CD4-positive, alpha-beta memory T cell (primary cell): ENCODE measurements at regions of chr7 and their contacts with region 1.

Region 1: GRCh38 chr7:107168233-107169119 is at the start of gene HBP1:
- DNase-seq: peak; percentile 97 to 100 (median 99)
- H3K4me3 ChIP-seq: peak within 1 kb of the TSS; percentile 84 to 85
- H3K4me3 Mint-ChIP-seq: peak within 1 kb of the TSS; percentile 90 to 100 (median 97)
- H3K27ac ChIP-seq: peak within 1 kb of the TSS; percentile 100
- H3K27ac Mint-ChIP-seq: peak within 1 kb of the TSS; percentile 98 to 100 (median 100)
- H3K4me1 ChIP-seq: peaks cover 44% of the 10 kb centered on the region
- H3K4me1 Mint-ChIP-seq: peaks cover 22 to 53% (median 37%) of the 10 kb centered on the region in 4 donors
- H3K27me3 ChIP-seq: no peaks in the 10 kb centered on the region
- H3K27me3 Mint-ChIP-seq: peaks cover 1 to 3% of the 10 kb centered on the region in 2 donors
- total RNA-seq, gene HBP1: 111 to 116 TPM

Region 2: DNA sequence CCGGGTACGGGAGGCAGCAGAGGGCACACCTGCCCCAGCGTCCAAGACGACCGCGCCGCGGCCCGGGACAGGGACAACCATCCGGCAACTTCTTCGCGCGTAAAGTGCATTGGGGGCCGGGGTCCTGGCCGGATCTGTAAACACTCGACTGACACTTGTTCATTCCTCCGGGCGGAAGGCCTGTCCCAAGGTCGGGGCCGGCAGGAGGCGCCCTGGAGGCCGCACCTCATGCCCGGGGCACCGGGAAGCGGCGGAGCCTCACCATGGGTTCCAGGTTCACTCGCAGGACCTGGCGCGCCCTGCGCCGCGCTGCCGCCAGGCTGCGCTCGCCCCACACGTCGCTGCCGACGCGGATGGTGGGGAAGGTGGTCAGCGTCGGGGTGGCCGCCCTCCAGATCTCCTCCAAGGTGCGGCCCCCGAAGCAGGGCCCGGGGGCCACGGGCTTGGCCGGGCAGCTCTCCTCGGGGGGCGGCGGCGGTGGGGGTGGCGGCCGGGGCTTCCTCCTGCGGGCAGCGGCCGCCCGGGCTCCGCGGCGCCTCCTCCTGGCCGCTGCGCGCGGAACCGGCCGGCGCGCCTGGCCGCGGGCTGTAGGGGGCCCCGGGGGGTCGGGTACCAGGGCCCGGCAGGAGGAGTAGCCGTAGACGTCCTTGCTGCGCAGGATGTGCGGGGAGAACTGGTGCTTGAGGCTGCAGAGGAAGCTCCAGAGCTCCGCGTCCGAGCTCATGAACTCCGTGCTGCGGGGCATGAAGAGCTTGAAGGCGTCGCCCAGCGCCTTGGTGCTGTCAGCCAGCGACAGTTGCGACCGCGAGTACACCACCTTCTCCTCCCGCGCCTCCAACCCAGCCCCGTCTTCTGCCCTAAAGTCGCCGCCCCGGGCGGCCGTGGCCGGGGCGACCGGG is 508.3 kb before region 1 on chr7:
- CTCF ChIA-PET with region 1: interaction called, 3 read pairs
- POLR2A ChIA-PET with region 1: interaction called, 5 read pairs
- intact Hi-C with region 1: loop called (anchors 2 kb)
- DNase-seq: peak; percentile 72 to 79 (median 76)
- H3K4me3 ChIP-seq: peak overlapping the region; percentile 14 to 58
- H3K4me3 Mint-ChIP-seq: peak overlapping the region; percentile 85 to 92 (median 88)
- H3K27ac ChIP-seq: peak overlapping the region; percentile 68
- H3K27ac Mint-ChIP-seq: peak overlapping the region; percentile 87 to 97 (median 93)
- H3K4me1 ChIP-seq: peaks cover 35% of the 10 kb centered on the region
- H3K4me1 Mint-ChIP-seq: peaks cover 17 to 40% (median 29%) of the 10 kb centered on the region in 4 donors
- H3K27me3 ChIP-seq: no peaks in the 10 kb centered on the region
- H3K27me3 Mint-ChIP-seq: no peaks in the 10 kb centered on the region

Region 3: GRCh38 chr7:107122486-107122911 is 46.0 kb before region 1 on chr7:
- CTCF ChIA-PET with region 1: interaction called, 6 read pairs
- POLR2A ChIA-PET with region 1: interaction called, 38 read pairs
- intact Hi-C with region 1: loop called (anchors 2 kb)
- DNase-seq: no peak
- H3K4me3 ChIP-seq: no peak overlapping the region
- H3K4me3 Mint-ChIP-seq: no peak overlapping the region
- H3K27ac ChIP-seq: no peak overlapping the region
- H3K27ac Mint-ChIP-seq: no peak overlapping the region
- H3K4me1 ChIP-seq: peaks cover 21% of the 10 kb centered on the region
- H3K4me1 Mint-ChIP-seq: peaks cover 13 to 24% (median 19%) of the 10 kb centered on the region in 4 donors
- H3K27me3 ChIP-seq: no peaks in the 10 kb centered on the region
- H3K27me3 Mint-ChIP-seq: peaks cover 4% of the 10 kb centered on the region in 2 donors

Region 4: GRCh38 chr7:107180378-107180777 is 11.9 kb after region 1 on chr7:
- CTCF ChIA-PET with region 1: interaction called, 5 read pairs
- POLR2A ChIA-PET with region 1: interaction called, 70 read pairs
- intact Hi-C with region 1: loop called (anchors 1 kb)
- DNase-seq: peak in 1 of 5 donors; percentile 78
- H3K4me3 ChIP-seq: no peak overlapping the region
- H3K4me3 Mint-ChIP-seq: peak overlapping the region in 4 of 8 donors; percentile 1 to 59 (median 15)
- H3K27ac ChIP-seq: peak overlapping the region; percentile 13
- H3K27ac Mint-ChIP-seq: peak overlapping the region in 6 of 7 donors; percentile 4 to 80 (median 30)
- H3K4me1 ChIP-seq: peaks cover 41% of the 10 kb centered on the region
- H3K4me1 Mint-ChIP-seq: peaks cover 27 to 61% (median 38%) of the 10 kb centered on the region in 4 donors
- H3K27me3 ChIP-seq: no peaks in the 10 kb centered on the region
- H3K27me3 Mint-ChIP-seq: no peaks in the 10 kb centered on the region

Region 5: GRCh38 chr7:107208024-107208521 is 39.6 kb after region 1 on chr7:
- CTCF ChIA-PET with region 1: no interaction called
- POLR2A ChIA-PET with region 1: interaction called, 13 read pairs
- intact Hi-C with region 1: no loop called
- DNase-seq: no peak
- H3K4me3 ChIP-seq: no peak overlapping the region
- H3K4me3 Mint-ChIP-seq: no peak overlapping the region
- H3K27ac ChIP-seq: no peak overlapping the region
- H3K27ac Mint-ChIP-seq: peak overlapping the region in 4 of 7 donors; percentile 27 to 60 (median 36)
- H3K4me1 ChIP-seq: no peaks in the 10 kb centered on the region
- H3K4me1 Mint-ChIP-seq: no peaks in the 10 kb centered on the region
- H3K27me3 ChIP-seq: no peaks in the 10 kb centered on the region
- H3K27me3 Mint-ChIP-seq: no peaks in the 10 kb centered on the region

Region 6: DNA sequence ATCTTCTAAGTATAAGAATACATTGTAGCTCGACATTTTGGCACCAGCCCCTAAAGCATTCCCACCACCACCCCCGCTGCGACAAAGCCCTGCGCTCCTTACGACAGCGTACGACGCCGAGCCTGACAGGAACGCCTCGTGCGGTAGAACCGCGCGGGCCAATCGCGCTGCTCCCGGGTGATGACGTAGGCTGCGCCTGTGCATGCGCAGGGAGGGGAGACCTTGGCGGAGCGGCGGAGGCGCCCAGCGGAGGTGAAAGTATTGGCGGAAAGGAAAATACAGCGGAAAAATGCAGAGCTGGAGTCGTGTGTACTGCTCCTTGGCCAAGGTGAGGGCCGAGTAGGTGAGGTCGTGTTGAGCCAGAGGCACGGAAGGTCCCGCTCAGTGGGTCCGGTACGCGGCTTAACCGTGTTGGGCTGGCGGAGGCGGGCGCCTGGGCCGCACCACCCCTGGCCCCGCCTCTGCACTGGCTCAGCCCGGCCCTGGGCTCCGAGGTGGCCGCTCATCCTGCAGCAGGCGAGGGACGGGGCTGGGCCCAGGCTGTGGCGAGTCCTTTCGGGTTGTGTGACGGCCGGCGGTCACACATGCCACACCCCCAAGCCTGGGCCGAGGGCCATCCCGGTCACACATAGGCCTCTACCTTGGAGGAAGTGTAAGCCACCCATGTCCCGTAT is 722.6 kb after region 1 on chr7 and contains the start of gene DLD:
- CTCF ChIA-PET with region 1: no interaction called
- POLR2A ChIA-PET with region 1: interaction called, 14 read pairs
- intact Hi-C with region 1: loop called (anchors 1 kb)
- DNase-seq: peak; percentile 92 to 95 (median 93)
- H3K4me3 ChIP-seq: peak within 1 kb of the TSS; percentile 84 to 98
- H3K4me3 Mint-ChIP-seq: peak within 1 kb of the TSS; percentile 93 to 100 (median 98)
- H3K27ac ChIP-seq: peak within 1 kb of the TSS; percentile 95
- H3K27ac Mint-ChIP-seq: peak within 1 kb of the TSS; percentile 97 to 100 (median 99)
- H3K4me1 ChIP-seq: peaks cover 52% of the 10 kb centered on the region
- H3K4me1 Mint-ChIP-seq: peaks cover 40 to 56% (median 48%) of the 10 kb centered on the region in 4 donors
- H3K27me3 ChIP-seq: no peaks in the 10 kb centered on the region
- H3K27me3 Mint-ChIP-seq: peaks cover 0 to 3% of the 10 kb centered on the region in 2 donors
- total RNA-seq, gene DLD: 42.1 to 51.1 TPM